ENCODE measurements at regions of chr12 and their contacts with region 1.

Region 1: GRCh38 chr12:126784328-126784921 is 1482.5 kb upstream of the TMEM132C start:
- DNase-seq: peak in 3 of 5 donors; percentile 17 to 45 (median 26)
- H3K4me3 ChIP-seq: no peak overlapping the region
- H3K4me3 Mint-ChIP-seq: no peak overlapping the region
- H3K27ac ChIP-seq: no peak overlapping the region
- H3K27ac Mint-ChIP-seq: peak overlapping the region in 3 of 7 donors; percentile 1 to 47 (median 38)
- H3K4me1 ChIP-seq: peaks cover 4% of the 10 kb centered on the region
- H3K4me1 Mint-ChIP-seq: peaks cover 8 to 41% (median 23%) of the 10 kb centered on the region in 4 donors
- H3K27me3 ChIP-seq: no peaks in the 10 kb centered on the region
- H3K27me3 Mint-ChIP-seq: peaks cover 0 to 1% of the 10 kb centered on the region in 2 donors

Region 2: DNA sequence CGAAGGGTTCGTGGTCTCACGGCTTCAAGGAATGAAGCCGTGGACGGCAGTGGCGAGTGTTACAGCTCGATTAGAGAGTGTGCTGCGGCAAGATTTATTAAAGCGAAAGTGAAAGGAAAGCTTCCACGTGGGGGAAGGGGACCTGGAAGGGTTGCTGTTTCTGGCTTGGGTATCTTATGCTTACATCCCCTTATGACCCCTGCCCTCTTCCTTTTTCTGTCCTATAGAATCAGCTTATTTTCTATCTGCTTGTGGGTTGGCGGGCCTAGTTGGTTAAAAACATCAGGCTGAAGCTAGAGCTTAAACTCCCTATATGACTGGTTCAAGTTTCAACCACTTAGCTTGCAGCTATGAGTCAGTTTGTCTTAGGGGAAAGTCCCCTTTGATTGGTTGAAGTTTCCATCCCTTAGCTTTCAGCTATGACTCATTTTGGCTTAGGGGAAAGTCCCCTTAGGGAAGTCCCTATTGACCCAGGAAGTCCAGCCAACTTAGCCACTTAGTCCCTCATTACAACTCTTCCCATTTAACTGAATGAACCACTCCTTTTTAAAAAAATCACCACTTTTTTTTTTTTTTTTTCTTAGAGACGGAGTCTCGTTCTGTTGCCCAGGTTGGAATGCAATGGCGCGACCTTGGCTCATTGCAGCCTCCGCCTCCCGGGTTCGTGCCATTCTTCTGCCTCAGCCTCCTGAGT is 12.1 kb before region 1 on chr12:
- CTCF ChIA-PET with region 1: interaction called, 17 read pairs
- POLR2A ChIA-PET with region 1: interaction called, 11 read pairs
- intact Hi-C with region 1: no loop called
- DNase-seq: peak; percentile 69 to 87 (median 78)
- H3K4me3 ChIP-seq: peak overlapping the region; percentile 1 to 61
- H3K4me3 Mint-ChIP-seq: peak overlapping the region; percentile 91 to 99 (median 96)
- H3K27ac ChIP-seq: peak overlapping the region; percentile 78
- H3K27ac Mint-ChIP-seq: peak overlapping the region; percentile 94 to 99 (median 98)
- H3K4me1 ChIP-seq: peaks cover 34% of the 10 kb centered on the region
- H3K4me1 Mint-ChIP-seq: peaks cover 16 to 46% (median 28%) of the 10 kb centered on the region in 4 donors
- H3K27me3 ChIP-seq: no peaks in the 10 kb centered on the region
- H3K27me3 Mint-ChIP-seq: no peaks in the 10 kb centered on the region

Region 3: GRCh38 chr12:126915309-126915708 is 130.9 kb after region 1 on chr12:
- CTCF ChIA-PET with region 1: no interaction called
- POLR2A ChIA-PET with region 1: no interaction called
- intact Hi-C with region 1: no loop called
- DNase-seq: no peak
- H3K4me3 ChIP-seq: no peak overlapping the region
- H3K4me3 Mint-ChIP-seq: no peak overlapping the region
- H3K27ac ChIP-seq: no peak overlapping the region
- H3K27ac Mint-ChIP-seq: no peak overlapping the region
- H3K4me1 ChIP-seq: no peaks in the 10 kb centered on the region
- H3K4me1 Mint-ChIP-seq: no peaks in the 10 kb centered on the region
- H3K27me3 ChIP-seq: no peaks in the 10 kb centered on the region
- H3K27me3 Mint-ChIP-seq: peaks cover 3% of the 10 kb centered on the region in 2 donors